OCI-LY7 (cell line): ENCODE measurements at regions of chr10 and their contacts with region 1.

Region 1: GRCh38 chr10:86376852-86377796 is 10.5 kb upstream of the GRID1 start:
- DNase-seq: peak; percentile 71
- H3K4me3 ChIP-seq: no peak overlapping the region
- H3K27ac ChIP-seq: no peak overlapping the region
- H3K4me1 ChIP-seq: peaks cover 8% of the 10 kb centered on the region
- CTCF ChIP-seq: peak; percentile 95

Region 2: GRCh38 chr10:85786401-85786899 is 590.7 kb before region 1 on chr10:
- CTCF ChIA-PET with region 1: no interaction called
- POLR2A ChIA-PET with region 1: no interaction called
- intact Hi-C with region 1: loop called (anchors 10 kb)
- DNase-seq: peak; percentile 17
- H3K4me3 ChIP-seq: no peak overlapping the region
- H3K27ac ChIP-seq: no peak overlapping the region
- H3K4me1 ChIP-seq: no peaks in the 10 kb centered on the region
- CTCF ChIP-seq: peak; percentile 49

Region 3: GRCh38 chr10:85927952-85928665 is 449.0 kb before region 1 on chr10:
- CTCF ChIA-PET with region 1: no interaction called
- POLR2A ChIA-PET with region 1: no interaction called
- intact Hi-C with region 1: no loop called
- DNase-seq: no peak
- H3K4me3 ChIP-seq: no peak overlapping the region
- H3K27ac ChIP-seq: no peak overlapping the region
- H3K4me1 ChIP-seq: no peaks in the 10 kb centered on the region
- CTCF ChIP-seq: no peak

Region 4: DNA sequence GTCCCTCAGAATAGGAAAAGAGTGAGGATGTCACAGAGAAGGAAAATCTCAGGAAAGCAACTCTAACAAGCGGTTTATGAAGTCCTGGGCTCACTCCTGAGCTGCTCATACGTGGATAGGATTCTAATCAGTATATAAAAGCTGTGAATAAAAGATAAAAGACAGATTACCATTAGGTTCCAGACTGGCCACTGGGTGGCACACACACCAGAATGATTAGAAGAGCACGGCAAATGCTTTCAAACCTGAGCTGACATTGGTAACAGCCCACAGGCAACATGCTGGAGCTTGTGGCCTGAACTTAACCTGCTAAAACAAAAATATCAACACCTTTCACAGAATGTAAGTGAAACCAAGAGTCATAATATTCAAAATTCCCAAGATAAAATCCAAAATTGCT is 381.3 kb before region 1 on chr10:
- CTCF ChIA-PET with region 1: no interaction called
- POLR2A ChIA-PET with region 1: no interaction called
- intact Hi-C with region 1: loop called (anchors 5 kb)
- DNase-seq: peak; percentile 50
- H3K4me3 ChIP-seq: no peak overlapping the region
- H3K27ac ChIP-seq: no peak overlapping the region
- H3K4me1 ChIP-seq: no peaks in the 10 kb centered on the region
- CTCF ChIP-seq: peak; percentile 81

Region 5: GRCh38 chr10:86100581-86101061 is 276.5 kb before region 1 on chr10:
- CTCF ChIA-PET with region 1: interaction called, 3 read pairs
- POLR2A ChIA-PET with region 1: no interaction called
- intact Hi-C with region 1: loop called (anchors 5 kb)
- DNase-seq: peak; percentile 66
- H3K4me3 ChIP-seq: no peak overlapping the region
- H3K27ac ChIP-seq: no peak overlapping the region
- H3K4me1 ChIP-seq: no peaks in the 10 kb centered on the region
- CTCF ChIP-seq: peak; percentile 84

Region 6: GRCh38 chr10:86261941-86262687 is 115.0 kb before region 1 on chr10:
- CTCF ChIA-PET with region 1: no interaction called
- POLR2A ChIA-PET with region 1: no interaction called
- intact Hi-C with region 1: loop called (anchors 1 kb)
- DNase-seq: peak; percentile 76
- H3K4me3 ChIP-seq: no peak overlapping the region
- H3K27ac ChIP-seq: no peak overlapping the region
- H3K4me1 ChIP-seq: no peaks in the 10 kb centered on the region
- CTCF ChIP-seq: peak; percentile 78

Region 7: GRCh38 chr10:86321568-86321967 is 55.6 kb before region 1 on chr10:
- CTCF ChIA-PET with region 1: no interaction called
- POLR2A ChIA-PET with region 1: no interaction called
- intact Hi-C with region 1: no loop called
- DNase-seq: no peak
- H3K4me3 ChIP-seq: no peak overlapping the region
- H3K27ac ChIP-seq: no peak overlapping the region
- H3K4me1 ChIP-seq: no peaks in the 10 kb centered on the region
- CTCF ChIP-seq: no peak